ENCODE measurements at regions of chr20 and their contacts with region 1.

Region 1: GRCh38 chr20:46562373-46563169 is 12.1 kb upstream of the OCSTAMP start:
- DNase-seq: peak; percentile 66
- H3K4me3 Mint-ChIP-seq: no peak overlapping the region
- H3K27ac Mint-ChIP-seq: no peak overlapping the region
- H3K4me1 Mint-ChIP-seq: peaks cover 11% of the 10 kb centered on the region
- H3K27me3 Mint-ChIP-seq: no peaks in the 10 kb centered on the region
- CTCF ChIP-seq: peak; percentile 66

Region 2: GRCh38 chr20:46199198-46199597 is 363.4 kb before region 1 on chr20:
- CTCF ChIA-PET with region 1: no interaction called
- POLR2A ChIA-PET with region 1: no interaction called
- intact Hi-C with region 1: no loop called
- DNase-seq: no peak
- H3K4me3 Mint-ChIP-seq: no peak overlapping the region
- H3K27ac Mint-ChIP-seq: no peak overlapping the region
- H3K4me1 Mint-ChIP-seq: no peaks in the 10 kb centered on the region
- H3K27me3 Mint-ChIP-seq: peaks cover 18% of the 10 kb centered on the region
- CTCF ChIP-seq: no peak

Region 3: GRCh38 chr20:46423882-46424482 is 138.6 kb before region 1 on chr20:
- CTCF ChIA-PET with region 1: no interaction called
- POLR2A ChIA-PET with region 1: no interaction called
- intact Hi-C with region 1: no loop called
- DNase-seq: peak; percentile 57
- H3K4me3 Mint-ChIP-seq: no peak overlapping the region
- H3K27ac Mint-ChIP-seq: no peak overlapping the region
- H3K4me1 Mint-ChIP-seq: no peaks in the 10 kb centered on the region
- H3K27me3 Mint-ChIP-seq: peaks cover 93% of the 10 kb centered on the region
- CTCF ChIP-seq: no peak

Region 4: DNA sequence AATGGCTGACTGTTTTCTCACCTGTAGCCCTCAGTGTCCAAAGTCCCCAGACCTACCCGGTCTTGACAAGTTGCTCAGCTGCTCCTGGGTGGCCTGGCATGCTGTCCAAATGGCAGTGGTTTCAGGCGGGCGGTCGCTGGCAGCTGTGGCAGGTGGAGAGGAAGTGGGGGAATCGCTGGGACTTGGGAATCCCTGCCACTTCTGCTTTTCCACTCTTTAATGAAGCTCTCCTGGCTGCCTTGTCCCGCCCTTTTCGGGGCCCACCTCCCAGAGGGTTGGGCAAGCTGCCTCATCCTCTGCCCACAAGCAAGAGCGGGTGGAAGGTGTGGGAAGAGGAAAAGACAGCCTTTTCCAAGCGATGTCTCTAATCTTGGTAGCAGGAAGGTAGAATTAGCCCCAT is 12.1 kb before region 1 on chr20 and contains the start of gene OCSTAMP:
- CTCF ChIA-PET with region 1: interaction called, 10 read pairs
- POLR2A ChIA-PET with region 1: interaction called, 4 read pairs
- intact Hi-C with region 1: no loop called
- DNase-seq: no peak
- H3K4me3 Mint-ChIP-seq: no peak within 1 kb of the TSS
- H3K27ac Mint-ChIP-seq: no peak within 1 kb of the TSS
- H3K4me1 Mint-ChIP-seq: no peaks in the 10 kb centered on the region
- H3K27me3 Mint-ChIP-seq: no peaks in the 10 kb centered on the region
- CTCF ChIP-seq: no peak
- total RNA-seq, gene OCSTAMP: not detected in 2 replicates

Measured in MCF 10A (cell line).